ENCODE measurements at regions of chr6 and their contacts with region 1.

Region 1: GRCh38 chr6:166402582-166403277 is 20.0 kb upstream of the MPC1 start:
- DNase-seq: no peak
- H3K4me3 ChIP-seq: no peak overlapping the region
- H3K27ac ChIP-seq: no peak overlapping the region
- H3K4me1 ChIP-seq: no peaks in the 10 kb centered on the region
- H3K27me3 ChIP-seq: no peaks in the 10 kb centered on the region
- CTCF ChIP-seq: no peak
- POLR2A ChIP-seq: no peak

Region 2: GRCh38 chr6:166275714-166276166 is 127.0 kb before region 1 on chr6:
- intact Hi-C with region 1: loop called (anchors 5 kb)
- DNase-seq: peak in 1 of 2 donors; percentile 77
- H3K4me3 ChIP-seq: no peak overlapping the region
- H3K27ac ChIP-seq: no peak overlapping the region
- H3K4me1 ChIP-seq: no peaks in the 10 kb centered on the region
- H3K27me3 ChIP-seq: no peaks in the 10 kb centered on the region
- CTCF ChIP-seq: peak; percentile 75 to 93 (median 82)
- POLR2A ChIP-seq: no peak

Region 3: DNA sequence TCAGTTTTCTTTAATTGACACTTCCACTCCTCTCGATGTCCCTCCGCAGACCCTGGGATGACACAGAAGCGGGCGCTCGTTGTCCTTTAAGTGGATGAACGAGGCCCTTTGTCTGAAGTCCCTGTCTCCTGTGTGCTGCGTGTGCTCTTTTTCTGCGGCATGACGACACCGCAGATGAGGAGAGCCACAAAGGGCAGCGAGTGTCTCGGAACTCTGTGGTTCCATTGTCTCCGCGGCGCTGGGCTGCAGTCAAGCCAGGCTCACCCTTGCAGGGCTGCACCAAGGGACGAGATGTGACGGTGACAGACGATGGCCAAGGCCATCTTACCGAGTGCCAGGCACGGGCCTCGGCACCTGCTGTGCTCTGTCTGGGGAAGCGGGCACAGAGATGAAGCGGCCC is 105.1 kb before region 1 on chr6:
- intact Hi-C with region 1: no loop called
- DNase-seq: no peak
- H3K4me3 ChIP-seq: no peak overlapping the region
- H3K27ac ChIP-seq: no peak overlapping the region
- H3K4me1 ChIP-seq: no peaks in the 10 kb centered on the region
- H3K27me3 ChIP-seq: no peaks in the 10 kb centered on the region
- CTCF ChIP-seq: no peak
- POLR2A ChIP-seq: no peak